Natural killer cell (primary cell): ENCODE measurements at regions of chr20 and their contacts with region 1.

Region 1: DNA sequence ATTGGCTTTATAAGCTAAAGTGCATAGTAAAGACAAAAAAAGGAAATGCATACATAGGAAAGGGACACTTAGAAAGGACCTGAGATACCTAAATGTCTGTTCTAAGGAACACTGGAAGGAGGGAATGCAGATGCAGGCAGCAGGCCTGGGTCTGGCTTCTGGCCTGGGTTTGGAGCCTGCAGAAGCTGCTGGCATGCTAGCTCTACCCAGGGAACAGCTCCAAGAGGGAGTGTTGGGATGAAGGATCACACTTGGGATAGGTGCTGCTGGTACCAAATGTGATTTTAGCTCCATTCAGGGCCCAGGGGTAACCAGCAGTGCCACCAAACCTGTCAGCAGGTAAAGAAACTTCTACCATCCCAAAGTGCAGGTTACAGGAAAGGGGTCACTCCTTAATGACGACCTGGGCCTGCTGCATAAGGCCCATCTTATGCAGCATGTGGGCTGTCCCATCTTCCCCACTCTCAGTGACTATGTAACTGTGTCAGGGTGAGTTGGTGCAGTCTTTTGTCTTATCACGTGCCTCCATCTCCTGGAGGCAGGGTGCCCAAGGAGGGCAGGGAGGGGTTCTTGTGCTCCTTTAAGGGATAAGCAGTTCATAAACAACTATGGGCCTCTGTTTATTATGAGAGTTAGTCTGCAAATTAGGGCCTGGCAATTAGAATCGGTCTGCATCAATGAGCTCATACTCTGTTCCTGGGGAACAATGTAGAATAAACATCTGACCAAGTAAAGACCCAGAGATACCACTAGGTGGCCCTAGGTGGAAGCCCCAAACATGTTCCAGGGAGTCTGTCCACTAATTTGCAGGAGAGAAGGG is 26.9 kb downstream of the DDX27 start:
- DNase-seq: peak in 1 of 2 donors; percentile 57
- ATAC-seq: peak; percentile 60 to 70 (median 61)
- H3K4me3 ChIP-seq: no peak overlapping the region
- H3K4me3 Mint-ChIP-seq: no peak overlapping the region
- H3K27ac ChIP-seq: no peak overlapping the region
- H3K27ac Mint-ChIP-seq: peak overlapping the region; percentile 33 to 64
- H3K4me1 ChIP-seq: no peaks in the 10 kb centered on the region
- H3K4me1 Mint-ChIP-seq: peaks cover 0 to 8% of the 10 kb centered on the region in 2 donors
- H3K27me3 ChIP-seq: no peaks in the 10 kb centered on the region
- H3K27me3 Mint-ChIP-seq: no peaks in the 10 kb centered on the region
- CTCF ChIP-seq: peak; percentile 56

Region 2: DNA sequence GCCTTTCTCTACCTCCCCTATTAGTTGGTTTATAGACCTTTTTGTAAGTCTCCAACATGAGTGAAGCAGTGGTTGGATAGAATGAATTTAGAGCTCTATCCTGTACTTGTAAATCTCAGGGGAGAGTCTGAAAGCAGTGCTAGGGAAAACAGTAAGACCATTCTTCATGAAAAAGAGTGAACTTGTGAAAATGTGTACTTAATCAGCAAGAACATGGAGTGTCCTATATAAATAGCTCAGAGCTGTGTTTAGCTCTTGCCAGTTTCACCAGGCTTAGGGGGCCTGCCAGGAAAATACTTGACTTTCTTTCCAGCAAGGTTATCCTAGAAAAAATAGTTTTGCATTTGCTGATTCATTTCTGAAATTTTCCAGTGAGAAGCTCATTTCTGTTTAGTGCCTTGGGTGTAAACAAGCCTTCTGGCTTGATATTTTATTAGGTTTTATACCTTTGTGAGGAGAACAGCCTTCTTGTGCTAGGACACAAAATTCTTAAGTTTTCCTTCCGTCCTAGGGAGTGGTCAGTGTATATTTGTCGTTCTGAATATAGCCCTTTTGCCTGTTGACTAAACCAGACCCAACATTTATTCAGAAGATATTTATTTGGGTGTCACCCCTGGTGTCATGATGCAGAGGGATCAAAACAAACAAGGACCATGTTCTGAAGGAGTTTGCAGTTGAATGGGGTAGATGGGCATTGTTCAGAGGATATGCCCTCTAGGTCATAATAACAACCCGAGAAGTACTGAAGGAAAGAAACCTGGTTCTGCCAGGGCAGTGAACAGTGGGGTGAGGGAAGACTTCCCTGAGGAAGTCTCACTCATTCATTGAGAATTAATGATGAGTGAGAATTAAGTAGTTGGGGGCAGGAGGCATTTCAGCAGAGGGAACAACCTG is 317.1 kb before region 1 on chr20:
- intact Hi-C with region 1: no loop called
- DNase-seq: no peak
- ATAC-seq: no peak
- H3K4me3 ChIP-seq: no peak overlapping the region
- H3K4me3 Mint-ChIP-seq: no peak overlapping the region
- H3K27ac ChIP-seq: no peak overlapping the region
- H3K27ac Mint-ChIP-seq: no peak overlapping the region
- H3K4me1 ChIP-seq: no peaks in the 10 kb centered on the region
- H3K4me1 Mint-ChIP-seq: peaks cover 7 to 26% of the 10 kb centered on the region in 2 donors
- H3K27me3 ChIP-seq: no peaks in the 10 kb centered on the region
- H3K27me3 Mint-ChIP-seq: no peaks in the 10 kb centered on the region
- CTCF ChIP-seq: no peak

Region 3: GRCh38 chr20:49122920-49123319 is 123.2 kb before region 1 on chr20:
- intact Hi-C with region 1: no loop called
- DNase-seq: no peak
- ATAC-seq: no peak
- H3K4me3 ChIP-seq: no peak overlapping the region
- H3K4me3 Mint-ChIP-seq: no peak overlapping the region
- H3K27ac ChIP-seq: no peak overlapping the region
- H3K27ac Mint-ChIP-seq: no peak overlapping the region
- H3K4me1 ChIP-seq: no peaks in the 10 kb centered on the region
- H3K4me1 Mint-ChIP-seq: no peaks in the 10 kb centered on the region
- H3K27me3 ChIP-seq: no peaks in the 10 kb centered on the region
- H3K27me3 Mint-ChIP-seq: no peaks in the 10 kb centered on the region
- CTCF ChIP-seq: no peak

Region 4: DNA sequence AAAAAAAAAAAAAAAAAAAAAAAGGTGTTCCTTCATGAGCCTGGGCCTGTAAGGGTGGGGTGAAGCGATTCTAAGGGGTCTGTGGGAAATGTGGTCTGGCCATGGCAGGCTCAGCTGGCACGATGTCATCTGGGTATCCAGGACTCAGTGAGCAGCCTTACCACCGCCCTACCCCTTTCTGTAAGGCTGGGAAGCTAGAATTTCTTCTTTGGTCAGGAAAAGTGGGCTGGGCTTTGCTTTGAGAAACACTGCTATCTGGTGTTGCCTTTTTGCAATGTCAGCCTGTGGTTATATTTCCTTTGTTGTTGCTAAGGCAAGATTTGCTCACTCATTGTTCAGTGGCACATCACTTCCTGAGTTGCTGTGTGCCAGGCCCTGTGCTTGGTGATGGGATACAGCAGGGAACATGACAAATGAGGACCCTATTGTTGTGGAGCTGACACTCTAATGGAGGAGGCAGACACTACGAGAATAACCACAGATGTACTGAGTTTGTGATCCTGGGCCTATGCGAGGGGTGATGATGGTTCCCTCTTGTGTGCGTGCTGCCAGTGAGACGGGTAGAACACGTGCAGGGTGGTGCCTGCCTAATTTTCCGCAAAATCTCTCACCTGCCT is 77.6 kb after region 1 on chr20:
- intact Hi-C with region 1: loop called (anchors 1 kb)
- DNase-seq: peak in 1 of 2 donors; percentile 71
- ATAC-seq: peak; percentile 80 to 89 (median 87)
- H3K4me3 ChIP-seq: no peak overlapping the region
- H3K4me3 Mint-ChIP-seq: no peak overlapping the region
- H3K27ac ChIP-seq: no peak overlapping the region
- H3K27ac Mint-ChIP-seq: peak overlapping the region in 1 of 2 donors; percentile 44
- H3K4me1 ChIP-seq: peaks cover 18% of the 10 kb centered on the region
- H3K4me1 Mint-ChIP-seq: peaks cover 10 to 27% of the 10 kb centered on the region in 2 donors
- H3K27me3 ChIP-seq: peaks cover 14% of the 10 kb centered on the region
- H3K27me3 Mint-ChIP-seq: peaks cover 25 to 30% of the 10 kb centered on the region in 2 donors
- CTCF ChIP-seq: peak; percentile 32

Region 5: DNA sequence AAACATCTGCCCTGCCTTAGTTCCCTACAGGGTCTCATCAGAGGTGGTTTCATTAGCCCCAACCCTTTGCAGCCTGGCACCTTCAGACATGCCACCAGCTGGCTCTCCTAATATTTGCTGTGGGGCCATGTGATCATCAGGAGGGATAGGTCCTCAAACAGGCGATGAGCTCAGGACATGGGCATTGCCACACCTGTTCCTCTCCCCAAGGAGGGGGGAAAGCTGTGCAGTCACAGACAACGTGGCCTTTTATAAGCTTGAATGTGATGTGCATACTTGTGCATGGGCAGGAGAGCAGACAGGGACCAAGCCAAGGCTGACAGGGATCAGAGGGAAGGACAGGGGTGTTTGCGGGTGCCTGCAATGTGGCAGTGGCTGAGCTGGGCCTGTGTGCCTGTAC is 110.5 kb after region 1 on chr20:
- intact Hi-C with region 1: no loop called
- DNase-seq: no peak
- ATAC-seq: no peak
- H3K4me3 ChIP-seq: no peak overlapping the region
- H3K4me3 Mint-ChIP-seq: no peak overlapping the region
- H3K27ac ChIP-seq: no peak overlapping the region
- H3K27ac Mint-ChIP-seq: no peak overlapping the region
- H3K4me1 ChIP-seq: no peaks in the 10 kb centered on the region
- H3K4me1 Mint-ChIP-seq: no peaks in the 10 kb centered on the region
- H3K27me3 ChIP-seq: no peaks in the 10 kb centered on the region
- H3K27me3 Mint-ChIP-seq: peaks cover 8 to 18% of the 10 kb centered on the region in 2 donors
- CTCF ChIP-seq: no peak